IMR-90 (cell line): ENCODE measurements at regions of chr3 and their contacts with region 1.

Region 1: GRCh38 chr3:52670621-52671521 is 14.8 kb downstream of the PBRM1 start:
- DNase-seq: peak; percentile 100
- ATAC-seq: peak; percentile 97
- H3K4me3 ChIP-seq: no peak overlapping the region
- H3K27ac ChIP-seq: peak overlapping the region; percentile 73
- H3K4me1 ChIP-seq: peaks cover 8% of the 10 kb centered on the region
- H3K27me3 ChIP-seq: no peaks in the 10 kb centered on the region
- CTCF ChIP-seq: peak; percentile 8; the same call in 1 of the 2 replicates
- POLR2A ChIP-seq: peak; percentile 90
- RAD21 ChIP-seq: peak; percentile 13; the same call in 1 of the 2 replicates

Region 2: DNA sequence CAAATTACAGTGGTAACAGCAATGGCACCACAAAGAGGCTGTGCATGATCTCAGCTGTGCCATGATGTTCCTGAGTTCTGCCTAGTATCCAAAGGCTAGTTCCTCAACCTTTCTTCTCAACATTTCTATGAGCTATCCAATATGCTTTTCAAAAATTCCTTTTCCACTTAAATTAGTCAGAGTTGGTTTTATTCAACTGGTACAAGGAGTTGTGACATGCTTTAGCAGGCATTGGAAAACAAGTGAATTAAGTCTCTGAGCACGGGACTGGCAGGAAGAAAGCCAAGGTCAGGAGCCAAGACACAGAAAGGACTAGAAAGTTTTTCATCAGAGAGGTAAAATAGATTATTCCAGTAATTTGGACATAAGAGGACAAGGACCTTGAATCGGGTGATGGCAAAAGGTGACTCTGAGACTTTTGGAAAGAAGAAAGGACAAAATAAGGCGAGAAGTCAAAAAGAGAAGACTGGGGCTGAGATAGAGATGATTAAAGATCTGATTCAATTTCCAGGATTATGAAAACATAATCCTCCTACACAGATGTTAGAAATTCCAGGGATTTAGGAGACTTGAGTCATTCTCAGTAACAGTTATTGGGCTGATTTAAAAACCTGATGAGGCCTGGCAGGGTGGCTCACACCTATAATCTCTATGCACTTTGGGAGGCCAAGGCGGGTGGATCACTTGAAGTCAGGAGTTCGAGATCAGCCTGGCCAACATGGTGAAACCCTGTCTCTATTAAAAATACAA is 21.2 kb before region 1 on chr3:
- CTCF ChIA-PET with region 1: interaction called, 10 read pairs
- POLR2A ChIA-PET with region 1: no interaction called
- dilution Hi-C with region 1: no loop called
- in situ Hi-C with region 1: no loop called
- intact Hi-C with region 1: no loop called
- DNase-seq: peak; percentile 70
- ATAC-seq: peak; percentile 77
- H3K4me3 ChIP-seq: no peak overlapping the region
- H3K27ac ChIP-seq: peak overlapping the region; percentile 73; the same call in 1 of the 2 replicates
- H3K4me1 ChIP-seq: peaks cover 8% of the 10 kb centered on the region; the same call in 1 of the 2 replicates
- H3K27me3 ChIP-seq: no peaks in the 10 kb centered on the region
- CTCF ChIP-seq: no peak
- POLR2A ChIP-seq: no peak
- RAD21 ChIP-seq: no peak

Region 3: GRCh38 chr3:52685709-52686691 is 15.1 kb after region 1 on chr3 and contains the starts of genes GNL3 and PBRM1:
- CTCF ChIA-PET with region 1: no interaction called
- POLR2A ChIA-PET with region 1: interaction called, 6 read pairs
- dilution Hi-C with region 1: no loop called
- in situ Hi-C with region 1: no loop called
- intact Hi-C with region 1: loop called (anchors 2 kb)
- DNase-seq: peak; percentile 96
- ATAC-seq: peak; percentile 94
- H3K4me3 ChIP-seq: peak within 1 kb of the TSS; percentile 89
- H3K27ac ChIP-seq: peak within 1 kb of the TSS; percentile 92
- H3K4me1 ChIP-seq: peaks cover 9% of the 10 kb centered on the region
- H3K27me3 ChIP-seq: no peaks in the 10 kb centered on the region
- CTCF ChIP-seq: no peak
- POLR2A ChIP-seq: peak; percentile 95
- RAD21 ChIP-seq: no peak
- total RNA-seq, gene GNL3: 66.0 and 117 TPM in 2 replicates
- total RNA-seq, gene PBRM1: 72.6 and 74.2 TPM in 2 replicates